Activated B cell treated with CpG ODN at 0.5 μM for 24 hours (primary cell): ENCODE measurements at regions of chrX and their contacts with region 1.

Region 1: DNA sequence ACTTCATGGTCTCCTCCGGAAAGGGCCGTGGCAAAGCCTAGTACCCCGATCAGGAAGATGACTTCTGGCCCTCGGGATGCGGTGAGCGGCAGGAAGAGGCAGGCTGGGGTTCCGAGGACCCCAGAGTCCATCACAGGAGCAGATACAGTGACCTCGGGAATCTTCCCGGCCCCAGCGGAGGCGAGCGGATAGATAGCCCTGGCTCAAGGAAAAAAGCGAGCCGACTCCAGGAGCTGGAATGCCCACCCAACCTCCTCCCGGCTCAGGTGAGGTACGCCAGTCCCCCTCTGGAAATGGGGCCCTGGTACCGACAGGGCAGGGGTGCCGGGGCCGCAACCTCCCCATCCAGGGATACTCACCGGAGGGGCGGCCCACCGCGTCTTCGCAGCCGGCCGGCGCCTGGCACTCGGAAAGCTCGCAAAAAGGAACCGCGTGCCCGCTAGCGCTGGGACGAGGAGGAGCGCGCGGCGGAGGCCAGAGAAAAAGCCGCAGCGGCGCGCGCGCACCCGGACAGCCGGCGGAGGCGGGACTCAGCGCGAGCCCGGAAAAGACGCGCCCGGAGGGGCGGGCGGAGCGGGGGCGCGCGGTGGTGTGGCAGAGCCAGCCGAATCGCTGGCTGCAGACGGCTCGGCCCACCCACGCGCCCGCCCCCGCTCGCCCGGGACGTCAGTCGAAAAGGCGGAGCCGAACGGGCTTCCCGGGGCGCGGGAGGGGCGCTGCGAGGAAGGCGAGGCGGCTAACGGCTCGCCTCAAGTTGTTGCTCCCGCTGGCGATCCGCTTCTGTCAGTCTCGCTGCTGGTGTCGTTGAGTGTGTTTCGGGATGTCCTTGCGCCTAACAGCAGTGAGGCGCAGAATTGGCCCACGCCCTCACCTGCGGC is at the start of gene ACSL4:
- DNase-seq: peak; percentile 82
- ATAC-seq: peak; percentile 92
- H3K4me3 Mint-ChIP-seq: peak within 1 kb of the TSS; percentile 99
- H3K27ac Mint-ChIP-seq: peak within 1 kb of the TSS; percentile 96
- H3K4me1 Mint-ChIP-seq: peaks cover 43% of the 10 kb centered on the region
- H3K27me3 Mint-ChIP-seq: no peaks in the 10 kb centered on the region
- CTCF ChIP-seq: no peak
- total RNA-seq, gene ACSL4: 36.7 and 55.2 TPM in 2 replicates

Region 2: GRCh38 chrX:109656774-109657173 is 76.2 kb before region 1 on chrX:
- CTCF ChIA-PET with region 1: no interaction called
- POLR2A ChIA-PET with region 1: no interaction called
- intact Hi-C with region 1: no loop called
- DNase-seq: no peak
- ATAC-seq: no peak
- H3K4me3 Mint-ChIP-seq: no peak overlapping the region
- H3K27ac Mint-ChIP-seq: no peak overlapping the region
- H3K4me1 Mint-ChIP-seq: peaks cover 2% of the 10 kb centered on the region
- H3K27me3 Mint-ChIP-seq: no peaks in the 10 kb centered on the region
- CTCF ChIP-seq: no peak

Region 3: GRCh38 chrX:109774706-109775105 is 41.7 kb after region 1 on chrX:
- CTCF ChIA-PET with region 1: no interaction called
- POLR2A ChIA-PET with region 1: no interaction called
- intact Hi-C with region 1: loop called (anchors 2 kb)
- DNase-seq: no peak
- ATAC-seq: peak; percentile 73
- H3K4me3 Mint-ChIP-seq: no peak overlapping the region
- H3K27ac Mint-ChIP-seq: no peak overlapping the region
- H3K4me1 Mint-ChIP-seq: no peaks in the 10 kb centered on the region
- H3K27me3 Mint-ChIP-seq: no peaks in the 10 kb centered on the region
- CTCF ChIP-seq: no peak

Region 4: GRCh38 chrX:109856974-109857373 is 124.0 kb after region 1 on chrX:
- CTCF ChIA-PET with region 1: interaction called, 3 read pairs
- POLR2A ChIA-PET with region 1: no interaction called
- intact Hi-C with region 1: loop called (anchors 5 kb)
- DNase-seq: no peak
- ATAC-seq: no peak
- H3K4me3 Mint-ChIP-seq: no peak overlapping the region
- H3K27ac Mint-ChIP-seq: no peak overlapping the region
- H3K4me1 Mint-ChIP-seq: peaks cover 7% of the 10 kb centered on the region
- H3K27me3 Mint-ChIP-seq: no peaks in the 10 kb centered on the region
- CTCF ChIP-seq: no peak

Region 5: DNA sequence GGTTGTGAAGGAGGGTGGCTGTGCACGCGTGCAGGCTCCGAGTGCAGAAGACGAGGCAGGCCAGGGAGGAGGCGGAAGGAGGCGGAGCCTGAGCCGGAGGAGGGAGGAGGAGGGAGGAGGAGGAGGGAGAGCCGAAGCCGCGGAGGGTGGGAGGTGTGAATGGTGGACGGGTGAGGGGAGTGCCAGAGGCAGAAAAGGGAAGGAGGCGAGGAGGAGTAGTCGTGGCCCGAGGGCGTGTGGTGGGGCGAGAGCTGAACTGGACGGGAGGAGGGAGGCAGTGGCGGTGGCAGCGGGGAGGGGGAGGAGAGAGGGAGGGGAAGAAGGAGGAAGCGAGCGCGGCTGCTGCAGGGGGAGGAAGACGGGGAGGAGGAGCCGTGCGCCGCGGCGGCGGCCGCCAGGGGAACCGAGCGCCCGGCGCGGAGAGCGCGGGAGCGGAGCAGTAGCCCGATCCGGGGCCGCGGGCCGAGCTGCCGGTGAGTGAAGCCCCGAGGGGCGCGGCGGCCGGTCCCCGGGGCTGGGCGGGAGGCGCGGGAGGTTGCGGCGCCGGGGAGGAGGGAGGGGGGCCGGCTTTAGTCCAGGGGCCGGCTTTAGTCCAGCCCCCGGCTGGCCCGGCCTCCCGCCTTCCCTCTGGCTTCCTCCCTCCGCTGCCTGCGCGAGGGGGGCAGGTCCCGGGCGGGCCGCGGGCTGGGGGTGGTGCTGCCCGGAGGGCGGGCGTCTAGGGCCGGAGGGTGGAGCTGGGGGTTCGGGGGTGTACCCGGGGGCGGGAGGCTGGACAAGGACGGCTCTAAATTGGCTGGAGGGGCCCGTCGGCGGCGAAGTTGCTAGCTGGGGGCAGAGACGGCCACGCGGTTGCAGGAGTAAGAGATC is 269.5 kb after region 1 on chrX and contains the start of gene TMEM164:
- CTCF ChIA-PET with region 1: no interaction called
- POLR2A ChIA-PET with region 1: no interaction called
- intact Hi-C with region 1: loop called (anchors 1 kb)
- DNase-seq: peak; percentile 71
- ATAC-seq: peak; percentile 74
- H3K4me3 Mint-ChIP-seq: peak within 1 kb of the TSS; percentile 87
- H3K27ac Mint-ChIP-seq: peak within 1 kb of the TSS; percentile 92
- H3K4me1 Mint-ChIP-seq: peaks cover 38% of the 10 kb centered on the region
- H3K27me3 Mint-ChIP-seq: no peaks in the 10 kb centered on the region
- CTCF ChIP-seq: no peak
- total RNA-seq, gene TMEM164: 20.4 and 21.8 TPM in 2 replicates

Region 6: DNA sequence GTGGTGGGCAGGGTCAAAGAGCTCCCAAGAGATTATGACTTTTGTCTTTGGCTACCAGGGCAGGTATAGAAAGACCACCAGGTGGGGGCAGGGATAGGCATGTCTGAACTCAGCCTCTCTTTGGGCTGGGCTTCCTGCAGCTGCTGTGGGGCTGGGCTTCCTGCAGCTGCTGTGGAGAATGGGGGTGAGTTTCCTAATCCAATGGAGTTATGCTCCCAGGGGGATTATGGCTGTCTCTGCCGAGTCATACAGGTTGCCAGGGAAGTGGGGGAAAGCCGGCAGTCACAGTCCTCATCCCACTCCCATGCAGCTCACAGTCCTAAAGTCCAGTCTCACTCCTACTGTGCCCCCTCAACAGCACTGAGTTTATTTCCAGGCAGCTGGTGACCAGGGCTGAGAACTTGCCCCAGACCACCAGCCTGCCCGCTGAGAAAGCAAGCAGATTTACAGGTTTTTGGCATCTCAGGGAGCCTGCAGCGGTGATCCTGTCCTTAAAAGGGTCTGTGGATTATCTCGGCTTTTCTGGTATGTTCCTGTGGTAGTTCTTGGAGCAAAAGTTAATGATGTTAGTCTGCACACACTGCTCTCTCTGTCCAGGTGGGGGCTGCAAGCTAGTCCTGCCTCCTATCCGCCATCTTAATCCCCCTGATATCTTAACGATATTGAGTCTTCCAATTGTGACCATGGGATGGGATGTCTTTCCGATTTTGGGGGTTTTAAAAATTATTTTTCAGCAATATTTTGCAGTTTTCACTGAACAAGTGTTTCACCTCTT is 759.0 kb after region 1 on chrX:
- CTCF ChIA-PET with region 1: no interaction called
- POLR2A ChIA-PET with region 1: no interaction called
- intact Hi-C with region 1: no loop called
- DNase-seq: no peak
- ATAC-seq: no peak
- H3K4me3 Mint-ChIP-seq: no peak overlapping the region
- H3K27ac Mint-ChIP-seq: no peak overlapping the region
- H3K4me1 Mint-ChIP-seq: no peaks in the 10 kb centered on the region
- H3K27me3 Mint-ChIP-seq: peaks cover 7% of the 10 kb centered on the region
- CTCF ChIP-seq: no peak